HEK293T (cell line): ENCODE measurements at regions of chr4 and their contacts with region 1.

Region 1: GRCh38 chr4:109126856-109127255 is 175.6 kb downstream of the COL25A1 start:
- DNase-seq: no peak

Region 2: DNA sequence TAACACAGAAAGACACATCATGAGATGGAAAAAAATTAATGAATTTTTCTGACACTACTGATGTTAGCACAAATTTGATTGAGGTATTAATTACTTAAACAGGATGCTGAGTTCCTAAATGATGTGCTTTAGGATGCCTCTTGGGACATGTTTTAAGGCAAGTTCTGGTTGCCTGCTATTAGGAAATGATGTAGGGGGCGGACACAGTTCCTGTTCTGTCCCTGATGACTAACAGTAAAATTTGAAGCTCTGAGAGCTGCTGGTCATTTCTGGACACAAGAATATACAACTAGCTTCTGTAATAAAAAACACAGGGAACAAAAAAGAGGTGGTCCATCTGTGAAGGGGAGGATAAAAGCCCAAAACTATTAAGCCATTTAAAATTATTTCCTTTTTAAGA is 200.8 kb before region 1 on chr4:
- CTCF ChIA-PET with region 1: no interaction called
- POLR2A ChIA-PET with region 1: no interaction called
- DNase-seq: no peak

Region 3: DNA sequence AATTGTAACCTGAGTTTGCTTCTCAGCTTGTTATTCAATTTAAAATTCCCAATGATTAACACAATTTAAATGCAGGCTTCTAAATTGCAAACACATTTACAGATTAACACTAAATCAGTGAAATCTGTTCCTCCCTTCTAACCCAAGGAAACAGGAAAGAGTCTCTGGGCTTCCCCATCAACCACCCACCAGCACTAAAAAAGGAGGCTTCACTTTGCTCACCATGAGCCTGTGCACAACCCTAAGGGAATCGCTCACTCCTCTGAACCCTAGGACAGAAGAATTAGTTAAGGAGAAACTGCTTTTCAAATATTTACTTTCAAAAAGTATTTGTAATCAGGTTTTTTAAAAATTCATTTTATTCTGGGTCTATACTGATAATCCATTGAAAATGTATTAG is 20.3 kb after region 1 on chr4:
- CTCF ChIA-PET with region 1: interaction called, 10 read pairs
- POLR2A ChIA-PET with region 1: no interaction called
- DNase-seq: no peak